Tibial artery (tissue), 4 donors: ENCODE measurements at regions of chr10 and their contacts with region 1.

Region 1: DNA sequence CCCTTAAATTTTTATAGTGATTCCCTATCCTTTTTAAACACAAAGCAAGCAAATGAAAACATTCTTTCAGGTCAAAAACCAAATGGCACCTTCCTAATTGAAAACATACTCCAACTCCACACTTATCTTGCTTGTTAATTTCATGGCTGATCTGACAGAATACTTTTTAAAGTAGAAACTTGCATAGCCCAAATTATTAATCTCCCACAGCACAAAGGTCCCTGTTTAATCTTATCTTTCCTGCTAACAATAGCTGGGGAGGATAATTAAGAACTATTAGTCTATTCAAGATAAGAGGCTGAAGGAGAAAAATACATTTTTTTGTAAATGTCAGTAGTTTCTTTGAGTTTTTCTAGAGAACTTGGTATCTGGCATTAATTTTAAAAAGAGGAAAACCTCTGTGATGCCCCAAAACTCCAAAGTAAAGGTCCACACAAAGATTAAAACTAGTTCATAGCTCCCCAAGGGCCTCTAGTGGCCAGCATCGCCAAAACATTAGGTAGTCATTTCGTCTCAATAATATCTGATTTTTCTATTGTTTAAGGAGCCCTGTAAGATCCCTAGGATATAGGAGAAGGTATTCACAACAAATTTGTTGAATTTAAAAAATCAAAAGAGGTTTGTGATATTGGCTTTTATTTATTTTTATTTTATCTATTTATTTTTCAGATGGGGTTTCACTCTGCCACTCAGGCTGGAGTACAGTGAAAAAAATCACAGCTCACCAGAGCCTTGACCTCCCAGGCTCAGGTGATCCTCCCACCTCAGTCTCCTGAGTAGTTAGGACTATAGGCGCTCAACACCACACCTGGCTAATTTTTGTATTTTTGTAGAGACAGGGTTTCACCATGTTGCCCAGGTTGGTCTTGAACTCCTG is 14.7 kb downstream of the CDNF start:
- DNase-seq: no peak
- H3K4me3 ChIP-seq: no peak overlapping the region
- H3K27ac ChIP-seq: no peak overlapping the region
- H3K4me1 ChIP-seq: peaks cover 0 to 8% (median 2%) of the 10 kb centered on the region in 4 donors
- H3K27me3 ChIP-seq: no peaks in the 10 kb centered on the region
- CTCF ChIP-seq: peak; percentile 50 to 64

Region 2: GRCh38 chr10:13891128-13892000 is 931.8 kb before region 1 on chr10:
- intact Hi-C with region 1: no loop called
- DNase-seq: peak in 1 of 2 donors; percentile 74
- H3K4me3 ChIP-seq: peak overlapping the region; percentile 63 to 84
- H3K27ac ChIP-seq: peak overlapping the region; percentile 91 to 95
- H3K4me1 ChIP-seq: peaks cover 0 to 50% (median 21%) of the 10 kb centered on the region in 4 donors
- H3K27me3 ChIP-seq: no peaks in the 10 kb centered on the region
- CTCF ChIP-seq: no peak

Region 3: GRCh38 chr10:14499601-14499904 is 323.6 kb before region 1 on chr10:
- intact Hi-C with region 1: loop called (anchors 5 kb)
- DNase-seq: no peak
- H3K4me3 ChIP-seq: no peak overlapping the region
- H3K27ac ChIP-seq: peak overlapping the region in 1 of 2 donors; percentile 51
- H3K4me1 ChIP-seq: peaks cover 0 to 10% (median 5%) of the 10 kb centered on the region in 4 donors
- H3K27me3 ChIP-seq: no peaks in the 10 kb centered on the region
- CTCF ChIP-seq: no peak

Region 4: GRCh38 chr10:14536241-14537213 is 286.6 kb before region 1 on chr10:
- intact Hi-C with region 1: loop called (anchors 5 kb)
- DNase-seq: peak; percentile 80 to 86
- H3K4me3 ChIP-seq: peak overlapping the region; percentile 2 to 19
- H3K27ac ChIP-seq: peak overlapping the region; percentile 51 to 82
- H3K4me1 ChIP-seq: peaks cover 0 to 27% (median 6%) of the 10 kb centered on the region in 4 donors
- H3K27me3 ChIP-seq: no peaks in the 10 kb centered on the region
- CTCF ChIP-seq: peak; percentile 59 to 68